ENCODE measurements at regions of chr16 and their contacts with region 1.

Region 1: DNA sequence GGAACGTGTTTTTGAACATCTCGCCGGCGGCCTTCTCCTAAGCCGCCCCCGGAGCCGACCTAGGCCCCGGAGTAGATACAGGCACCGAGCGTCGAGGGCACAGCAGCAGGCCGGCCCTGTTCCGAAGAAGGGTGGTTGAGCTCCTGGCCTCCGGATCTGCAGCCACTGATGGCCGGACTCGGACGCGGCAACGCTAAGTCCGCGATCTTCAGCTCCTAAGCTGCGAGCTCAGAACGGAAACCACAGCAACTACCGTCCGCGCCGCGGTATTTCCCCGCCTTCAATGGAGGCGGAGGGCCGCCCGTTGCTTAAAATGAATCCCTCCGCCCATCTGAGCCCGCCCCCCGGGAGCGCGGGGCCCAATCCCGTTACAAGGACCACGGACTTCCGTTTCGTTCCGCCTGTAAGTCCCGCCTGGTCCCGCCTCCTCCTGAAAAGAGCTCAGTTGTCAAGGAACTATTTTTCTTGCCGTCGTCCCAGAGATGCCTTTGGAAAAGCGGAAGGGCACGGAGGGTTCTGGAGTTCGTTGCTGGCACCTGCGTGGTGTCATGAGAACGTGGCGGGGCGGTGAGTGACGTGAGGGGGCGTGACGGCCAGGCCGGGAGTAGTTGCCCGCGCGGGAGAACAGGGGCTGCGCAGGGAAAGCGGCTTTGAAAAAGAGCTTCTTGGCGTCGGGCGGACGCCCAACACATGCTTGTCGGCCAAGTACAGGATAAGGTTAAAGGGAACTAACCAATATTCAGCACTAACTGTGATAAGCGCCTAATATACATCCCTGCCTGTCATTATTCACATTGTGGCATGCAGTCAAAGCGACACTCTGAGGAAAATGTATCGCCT is at the start of gene CFAP20:
- DNase-seq: peak; percentile 100
- H3K4me3 ChIP-seq: peak within 1 kb of the TSS; percentile 99
- H3K27ac ChIP-seq: peak within 1 kb of the TSS; percentile 88
- H3K4me1 ChIP-seq: peaks cover 28% of the 10 kb centered on the region
- CTCF ChIP-seq: no peak
- total RNA-seq, gene CFAP20: 65.6 and 89.2 TPM in 2 replicates

Region 2: DNA sequence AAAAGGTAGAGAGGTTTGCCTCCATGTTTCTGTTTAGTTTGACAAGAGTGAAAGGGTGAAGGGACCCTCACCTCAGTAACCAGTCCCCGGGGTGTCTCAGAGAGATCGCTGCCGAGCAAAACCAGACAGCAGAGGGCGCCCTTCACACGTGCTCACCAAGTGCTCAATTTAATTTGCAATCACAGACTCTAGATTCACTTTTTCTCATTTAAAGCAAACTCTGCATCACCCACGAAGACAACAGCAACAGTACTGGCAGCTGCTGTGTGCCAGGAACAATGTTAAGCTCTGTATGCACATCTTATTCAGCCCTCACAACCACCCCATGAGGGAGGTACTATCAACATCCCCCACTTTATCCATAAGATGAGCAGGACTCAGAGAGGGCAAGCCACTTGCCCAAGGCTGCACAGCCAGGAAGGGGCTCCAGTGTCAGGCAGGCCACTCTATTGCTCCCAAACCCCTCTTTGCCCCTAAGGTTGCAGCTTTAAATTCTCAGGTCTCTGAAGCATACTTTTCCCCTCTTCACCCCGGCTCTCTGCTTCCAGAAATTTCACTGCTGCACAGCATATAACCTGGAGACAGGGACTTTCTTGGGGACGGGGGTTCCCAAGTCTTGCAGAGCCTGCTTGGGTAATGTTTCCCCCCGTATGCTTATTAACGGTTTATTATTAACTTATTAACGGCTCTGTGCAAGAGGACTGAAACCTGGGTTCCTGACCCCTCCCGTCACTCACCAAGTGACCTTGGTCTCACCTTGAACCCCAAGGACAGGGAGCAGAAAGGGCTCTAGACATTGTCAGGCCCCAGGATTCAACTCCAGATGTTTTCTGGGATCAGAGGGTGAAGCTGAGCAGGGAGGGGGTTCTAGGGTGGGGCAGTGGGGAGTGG is 229.3 kb before region 1 on chr16:
- CTCF ChIA-PET with region 1: no interaction called
- POLR2A ChIA-PET with region 1: no interaction called
- intact Hi-C with region 1: loop called (anchors 5 kb)
- DNase-seq: peak; percentile 68
- H3K4me3 ChIP-seq: no peak overlapping the region
- H3K27ac ChIP-seq: no peak overlapping the region
- H3K4me1 ChIP-seq: no peaks in the 10 kb centered on the region
- CTCF ChIP-seq: peak; percentile 98

Region 3: GRCh38 chr16:58198022-58198683 is 68.8 kb after region 1 on chr16 and contains the start of gene CSNK2A2:
- CTCF ChIA-PET with region 1: no interaction called
- POLR2A ChIA-PET with region 1: interaction called, 3 read pairs
- intact Hi-C with region 1: loop called (anchors 2 kb)
- DNase-seq: peak; percentile 88
- H3K4me3 ChIP-seq: peak within 1 kb of the TSS; percentile 81
- H3K27ac ChIP-seq: no peak within 1 kb of the TSS
- H3K4me1 ChIP-seq: peaks cover 14% of the 10 kb centered on the region
- CTCF ChIP-seq: no peak
- total RNA-seq, gene CSNK2A2: 20.6 and 28.7 TPM in 2 replicates

Region 4: DNA sequence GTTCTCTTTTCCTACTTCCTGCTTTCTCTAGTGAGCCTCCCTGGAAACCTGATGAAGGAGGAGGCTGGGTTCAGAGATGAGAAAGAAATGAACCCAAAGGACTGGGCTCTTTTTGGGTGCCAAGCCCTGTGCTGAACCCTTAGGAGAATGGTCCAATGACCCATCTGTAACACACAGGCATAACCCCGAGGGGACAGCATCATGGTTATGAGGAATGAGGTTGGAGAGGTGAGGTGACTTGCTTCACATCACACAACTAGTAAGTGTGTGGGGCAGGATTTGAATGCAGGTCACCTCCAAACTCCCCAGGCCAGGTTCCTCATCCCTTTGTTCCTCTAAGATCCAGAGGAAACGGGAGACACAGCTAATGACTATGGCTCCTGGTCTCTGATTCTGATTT is 102.5 kb after region 1 on chr16:
- CTCF ChIA-PET with region 1: no interaction called
- POLR2A ChIA-PET with region 1: no interaction called
- intact Hi-C with region 1: no loop called
- DNase-seq: no peak
- H3K4me3 ChIP-seq: no peak overlapping the region
- H3K27ac ChIP-seq: no peak overlapping the region
- H3K4me1 ChIP-seq: peaks cover 5% of the 10 kb centered on the region
- CTCF ChIP-seq: no peak

Measured in OCI-LY7 (cell line).